Ascending aorta (tissue), 2 donors: ENCODE measurements at regions of chr10 and their contacts with region 1.

Region 1: GRCh38 chr10:43461950-43462349 is 25.0 kb downstream of the ZNF487 start:
- DNase-seq: no peak
- H3K4me3 ChIP-seq: no peak overlapping the region
- H3K27ac ChIP-seq: no peak overlapping the region
- H3K4me1 ChIP-seq: no peaks in the 10 kb centered on the region
- H3K27me3 ChIP-seq: no peaks in the 10 kb centered on the region
- CTCF ChIP-seq: peak; percentile 41 to 75 (median 57)

Region 2: GRCh38 chr10:43292755-43293676 is 168.9 kb before region 1 on chr10:
- intact Hi-C with region 1: loop called (anchors 1 kb)
- DNase-seq: no peak
- H3K4me3 ChIP-seq: no peak overlapping the region
- H3K27ac ChIP-seq: no peak overlapping the region
- H3K4me1 ChIP-seq: no peaks in the 10 kb centered on the region
- H3K27me3 ChIP-seq: no peaks in the 10 kb centered on the region
- CTCF ChIP-seq: peak; percentile 48 to 69 (median 61)

Region 3: GRCh38 chr10:43407576-43408330 is 54.2 kb before region 1 on chr10:
- intact Hi-C with region 1: no loop called
- DNase-seq: peak; percentile 77 to 95
- H3K4me3 ChIP-seq: peak overlapping the region; percentile 81 to 85
- H3K27ac ChIP-seq: peak overlapping the region; percentile 100
- H3K4me1 ChIP-seq: peaks cover 6 to 29% of the 10 kb centered on the region in 2 donors
- H3K27me3 ChIP-seq: no peaks in the 10 kb centered on the region
- CTCF ChIP-seq: peak; percentile 16 to 33 (median 19)